Naive thymus-derived CD4-positive, alpha-beta T cell (primary cell): ENCODE measurements at regions of chr1 and their contacts with region 1.

Region 1: GRCh38 chr1:27097484-27097917 is 57.4 kb downstream of the SLC9A1 start:
- DNase-seq: peak; percentile 49 to 79 (median 63)
- ATAC-seq: peak; percentile 83
- H3K4me3 ChIP-seq: no peak overlapping the region
- H3K4me3 Mint-ChIP-seq: no peak overlapping the region
- H3K27ac ChIP-seq: no peak overlapping the region
- H3K27ac Mint-ChIP-seq: no peak overlapping the region
- H3K4me1 ChIP-seq: no peaks in the 10 kb centered on the region
- H3K4me1 Mint-ChIP-seq: peaks cover 0 to 18% (median under 1%) of the 10 kb centered on the region in 7 donors
- H3K27me3 ChIP-seq: no peaks in the 10 kb centered on the region
- H3K27me3 Mint-ChIP-seq: no peaks in the 10 kb centered on the region

Region 2: DNA sequence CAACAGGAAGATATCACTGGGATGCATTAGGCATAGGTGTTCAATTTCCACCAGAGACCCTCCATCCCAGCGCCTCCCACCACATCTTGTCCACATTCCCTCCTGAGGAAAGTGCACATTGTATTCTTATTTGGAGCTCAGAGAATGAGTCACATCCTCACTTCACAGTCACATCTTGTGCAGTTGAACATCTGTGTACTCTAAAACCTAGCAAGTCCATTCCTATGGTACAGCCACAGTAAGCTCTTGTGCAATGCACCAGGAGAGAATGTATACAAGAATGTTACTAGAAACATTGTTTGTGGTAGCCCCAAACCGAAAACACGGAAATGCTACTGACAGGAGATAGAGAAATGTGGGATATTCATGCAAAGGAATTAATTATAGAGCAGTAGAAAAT is 135.7 kb before region 1 on chr1:
- CTCF ChIA-PET with region 1: interaction called, 3 read pairs
- POLR2A ChIA-PET with region 1: no interaction called
- intact Hi-C with region 1: loop called in 1 of 2 experiments (anchors 5 kb)
- DNase-seq: no peak
- ATAC-seq: no peak
- H3K4me3 ChIP-seq: no peak overlapping the region
- H3K4me3 Mint-ChIP-seq: peak overlapping the region in 1 of 10 donors; percentile 13
- H3K27ac ChIP-seq: no peak overlapping the region
- H3K27ac Mint-ChIP-seq: no peak overlapping the region
- H3K4me1 ChIP-seq: peaks cover 6 to 8% of the 10 kb centered on the region in 2 donors
- H3K4me1 Mint-ChIP-seq: peaks cover 4 to 11% (median 5%) of the 10 kb centered on the region in 7 donors
- H3K27me3 ChIP-seq: no peaks in the 10 kb centered on the region
- H3K27me3 Mint-ChIP-seq: peaks cover 12 to 69% (median 29%) of the 10 kb centered on the region in 5 donors